ENCODE measurements at regions of chr9 and their contacts with region 1.

Region 1: GRCh38 chr9:8857926-8858595 is 1058.5 kb upstream of the DMAC1 start:
- DNase-seq: peak; percentile 76 to 86 (median 82)
- H3K4me3 ChIP-seq: peak overlapping the region; percentile 51
- H3K27ac ChIP-seq: peak overlapping the region; percentile 84 to 91
- H3K4me1 ChIP-seq: peaks cover 5% of the 10 kb centered on the region
- H3K27me3 ChIP-seq: no peaks in the 10 kb centered on the region
- CTCF ChIP-seq: no peak
- EP300 ChIP-seq: no peak
- POLR2A ChIP-seq: no peak

Region 2: GRCh38 chr9:8706531-8706930 is 151.5 kb before region 1 on chr9:
- intact Hi-C with region 1: loop called in 1 of 4 experiments (anchors 10 kb)
- DNase-seq: no peak
- H3K4me3 ChIP-seq: no peak overlapping the region
- H3K27ac ChIP-seq: no peak overlapping the region
- H3K4me1 ChIP-seq: no peaks in the 10 kb centered on the region
- H3K27me3 ChIP-seq: peaks cover 4% of the 10 kb centered on the region
- CTCF ChIP-seq: no peak
- EP300 ChIP-seq: no peak
- POLR2A ChIP-seq: no peak